ENCODE measurements at regions of chr3 and their contacts with region 1.

Region 1: DNA sequence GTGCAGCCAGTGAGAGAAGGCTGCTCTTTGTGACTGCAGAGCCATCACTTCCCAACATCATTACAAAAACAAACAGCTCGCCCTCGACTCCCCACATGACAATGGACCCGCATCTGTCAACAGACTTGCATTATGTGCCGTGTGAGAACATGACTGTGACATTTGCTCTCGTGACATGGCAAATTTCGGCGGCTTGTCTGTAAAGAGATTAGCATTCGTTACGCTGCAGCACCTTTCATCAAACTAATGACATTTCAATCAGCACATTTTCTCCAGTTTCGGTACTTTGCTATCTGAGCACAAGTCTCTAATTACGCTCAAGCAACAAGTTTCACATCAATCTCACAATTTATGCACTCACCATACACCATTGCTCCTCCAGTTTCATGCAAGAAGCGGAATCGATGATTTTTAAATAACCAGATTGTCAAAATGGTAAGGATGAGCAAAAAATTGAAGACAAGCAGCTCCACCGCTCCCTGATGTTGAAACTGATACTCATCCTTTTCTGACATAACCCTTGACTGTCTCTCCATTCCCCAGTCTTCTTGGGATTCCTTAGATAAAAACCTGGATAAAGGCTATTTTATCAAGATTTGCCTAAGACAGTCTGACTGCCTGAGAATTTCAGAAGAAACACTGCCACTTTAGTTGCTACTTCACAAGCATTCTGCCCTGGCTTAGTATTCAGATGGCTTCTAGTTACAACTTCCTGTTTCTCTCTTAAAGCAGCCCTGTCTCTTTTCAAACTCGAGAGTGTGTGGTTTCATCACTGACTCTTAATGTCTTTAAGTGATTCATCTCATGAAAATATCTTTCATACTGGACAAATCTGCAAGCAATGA is at the start of gene SLC9A9:
- DNase-seq: peak; percentile 9 to 85 (median 66)

Region 2: GRCh38 chr3:143786219-143787191 is 61.5 kb before region 1 on chr3:
- intact Hi-C with region 1: loop called (anchors 10 kb)
- DNase-seq: peak in 14 of 42 donors; percentile 10 to 62 (median 37)

Region 3: DNA sequence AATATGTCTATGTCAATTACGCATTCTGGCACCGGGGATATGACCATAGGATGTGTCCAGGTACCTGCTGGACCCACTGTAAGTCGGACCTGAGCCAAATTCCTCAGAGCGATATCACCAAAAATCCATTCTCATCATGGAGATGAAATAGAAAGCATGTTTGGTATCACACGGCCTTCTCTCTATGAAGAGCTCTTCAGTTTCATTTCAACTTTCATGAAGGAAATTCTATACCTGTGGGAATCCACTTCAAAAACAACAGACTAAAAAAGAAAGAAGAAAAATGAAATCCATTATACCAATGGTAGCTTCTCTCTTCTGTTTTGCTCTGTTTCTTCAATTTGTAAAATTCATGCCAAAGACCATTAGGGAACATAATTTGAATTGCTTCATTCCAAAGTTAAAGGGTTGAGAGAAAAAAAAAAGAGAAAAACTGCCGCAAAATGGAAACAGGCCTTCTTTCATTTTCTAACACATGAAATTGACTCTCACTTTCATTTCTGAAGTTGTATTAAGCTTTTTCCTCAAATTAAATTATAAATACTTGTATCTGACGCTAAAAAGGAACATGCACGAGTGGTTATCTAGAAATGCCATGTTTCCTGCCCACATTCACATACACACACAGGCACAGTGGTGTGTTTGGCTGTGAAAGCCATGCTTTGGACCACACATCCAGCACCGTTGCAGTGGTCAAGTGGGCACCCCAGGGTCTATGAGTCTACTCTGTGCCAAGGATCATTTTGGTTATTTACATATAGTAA is 76.7 kb after region 1 on chr3:
- intact Hi-C with region 1: no loop called
- DNase-seq: no peak

Region 4: GRCh38 chr3:143956838-143957237 is 108.8 kb after region 1 on chr3:
- intact Hi-C with region 1: no loop called
- DNase-seq: no peak

Region 5: GRCh38 chr3:145145461-145145860 is 1297.5 kb after region 1 on chr3:
- intact Hi-C with region 1: no loop called
- DNase-seq: no peak